Lower leg skin (tissue), 4 donors: ENCODE measurements at regions of chr11 and their contacts with region 1.

Region 1: DNA sequence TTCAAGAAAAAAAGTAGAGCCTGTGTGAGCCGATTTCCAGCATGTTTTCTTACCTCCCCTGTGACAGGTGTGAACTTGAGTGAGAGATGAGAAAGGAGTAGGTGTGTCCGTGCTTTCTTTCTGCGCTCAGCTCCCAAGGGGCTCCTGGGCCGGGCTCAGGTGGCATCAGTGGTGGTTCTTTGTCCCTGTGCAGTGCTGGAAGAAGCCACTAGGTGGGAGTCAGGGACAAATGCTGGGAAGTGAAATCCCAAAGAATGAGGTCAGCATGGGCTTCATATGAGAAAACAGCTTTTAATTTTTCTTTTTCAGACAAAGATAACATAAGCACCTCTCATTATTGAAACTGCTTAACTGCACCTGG is 57.8 kb downstream of the PPFIBP2 start:
- DNase-seq: peak; percentile 70 to 93
- H3K4me3 ChIP-seq: no peak overlapping the region
- CTCF ChIP-seq: peak in 1 of 3 donors; percentile 95
- POLR2A ChIP-seq: no peak

Region 2: GRCh38 chr11:7657306-7658025 is 85.8 kb after region 1 on chr11:
- intact Hi-C with region 1: loop called (anchors 5 kb)
- DNase-seq: peak; percentile 76 to 91
- H3K4me3 ChIP-seq: no peak overlapping the region
- CTCF ChIP-seq: no peak
- POLR2A ChIP-seq: no peak

Region 3: DNA sequence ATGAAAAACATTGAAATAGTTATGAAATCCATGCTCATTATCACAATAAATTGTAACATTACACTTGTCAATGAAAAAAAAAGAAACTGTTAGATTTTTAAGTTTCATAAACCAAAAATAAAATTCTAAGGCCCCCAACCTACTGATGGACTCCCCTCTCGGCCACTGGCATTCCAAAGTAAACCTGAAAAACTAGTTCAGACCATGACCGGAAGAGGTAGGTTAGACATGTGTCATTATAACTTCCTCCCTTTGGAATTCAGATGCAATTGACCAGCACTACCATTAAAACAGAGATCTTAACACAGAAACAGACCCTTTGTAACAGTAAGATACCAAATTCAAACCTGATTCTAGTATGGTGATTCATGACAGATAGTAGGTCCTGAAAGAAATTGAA is 346.5 kb after region 1 on chr11:
- intact Hi-C with region 1: no loop called
- DNase-seq: no peak
- H3K4me3 ChIP-seq: no peak overlapping the region
- CTCF ChIP-seq: no peak
- POLR2A ChIP-seq: no peak